ENCODE measurements at regions of chr6 and their contacts with region 1.

Region 1: DNA sequence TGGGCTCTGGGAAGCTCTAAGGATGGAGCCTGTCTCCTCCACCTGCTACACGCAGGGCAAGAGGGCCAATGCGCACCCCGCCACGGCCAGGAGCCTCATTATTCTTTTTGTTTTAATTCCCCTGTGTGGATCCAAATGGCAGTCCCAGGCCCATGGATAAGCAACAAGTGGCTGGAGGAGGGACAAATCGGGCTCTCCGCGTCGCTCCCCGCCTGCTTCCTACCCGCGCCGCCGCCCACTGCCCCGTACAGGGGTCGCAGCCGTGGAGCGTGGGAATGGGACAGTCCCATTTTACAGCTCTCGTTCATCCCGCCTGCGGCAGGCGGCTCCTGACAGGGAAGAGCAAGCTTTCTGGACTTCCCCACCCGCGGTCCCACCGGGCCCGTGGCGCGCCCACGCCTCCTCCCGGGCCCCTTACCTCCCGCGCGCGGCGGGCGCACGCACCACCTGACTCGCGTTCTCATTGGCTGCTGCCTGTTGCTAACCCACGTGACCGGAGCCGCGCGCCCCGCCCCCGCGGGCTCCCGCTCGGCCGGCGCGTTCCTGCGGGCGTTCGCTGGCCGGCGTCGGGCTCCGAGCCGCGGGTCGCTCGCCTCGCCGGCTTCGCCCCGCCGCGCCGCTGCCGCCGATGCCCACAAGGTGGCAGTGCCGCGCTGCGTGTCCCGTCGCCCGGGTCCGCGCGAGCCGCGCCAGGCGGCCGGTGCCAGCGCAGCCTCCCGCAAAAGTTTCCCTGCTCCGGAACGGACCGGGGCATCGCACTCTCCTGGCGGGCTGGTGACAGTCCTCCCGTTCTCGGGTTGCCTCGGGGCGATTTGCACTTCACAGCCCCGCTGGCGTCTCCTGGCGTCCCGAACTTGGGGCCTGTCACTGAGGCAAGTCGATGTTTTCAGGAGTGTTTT is 93.3 kb downstream of the CD83 start:
- DNase-seq: peak; percentile 87 to 92
- ATAC-seq: peak; percentile 92 to 94
- H3K4me3 ChIP-seq: peak overlapping the region; percentile 75 to 93 (median 82)
- H3K27ac ChIP-seq: peak overlapping the region; percentile 86 to 89 (median 87)
- H3K4me1 ChIP-seq: peaks cover 12% of the 10 kb centered on the region in 2 donors
- H3K27me3 ChIP-seq: no peaks in the 10 kb centered on the region
- CTCF ChIP-seq: peak; percentile 48 to 99 (median 98)
- POLR2A ChIP-seq: peak; percentile 63 to 78

Region 2: GRCh38 chr6:14002176-14002947 is 208.6 kb before region 1 on chr6:
- in situ Hi-C with region 1: no loop called
- intact Hi-C with region 1: no loop called
- DNase-seq: no peak
- ATAC-seq: no peak
- H3K4me3 ChIP-seq: no peak overlapping the region
- H3K27ac ChIP-seq: no peak overlapping the region
- H3K4me1 ChIP-seq: no peaks in the 10 kb centered on the region
- H3K27me3 ChIP-seq: no peaks in the 10 kb centered on the region
- CTCF ChIP-seq: no peak
- POLR2A ChIP-seq: no peak

Region 3: DNA sequence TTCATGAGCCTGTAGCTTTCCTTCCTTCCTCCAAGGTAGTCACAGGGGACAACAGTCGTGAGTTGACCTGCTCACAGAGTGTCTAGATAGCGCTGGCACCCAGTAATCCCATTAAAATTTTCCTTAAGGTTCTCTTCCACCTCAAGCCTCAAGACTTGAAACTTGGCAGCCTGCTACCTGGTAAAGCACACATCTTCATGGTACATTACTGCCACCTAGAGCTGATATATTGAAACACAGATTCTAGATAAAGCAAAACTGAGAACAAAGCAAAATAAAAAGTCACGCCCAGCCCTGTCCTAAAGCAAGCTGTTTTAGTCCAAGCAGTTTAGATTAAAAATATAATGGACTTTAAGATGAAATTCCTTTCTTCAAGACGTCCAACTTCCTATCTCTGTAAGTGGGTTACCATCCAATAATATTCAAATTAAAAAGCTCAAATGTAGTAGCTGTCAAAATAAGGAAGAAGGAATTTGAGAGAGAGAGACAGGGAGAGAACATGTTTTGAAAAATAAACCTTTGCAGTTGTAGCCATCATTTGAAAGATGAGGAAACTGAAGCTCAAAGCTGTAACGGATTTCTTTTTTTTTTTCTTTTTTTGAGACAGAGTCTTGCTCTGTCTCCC is 144.0 kb before region 1 on chr6:
- in situ Hi-C with region 1: no loop called
- intact Hi-C with region 1: no loop called
- DNase-seq: no peak
- ATAC-seq: peak; percentile 56 to 78
- H3K4me3 ChIP-seq: no peak overlapping the region
- H3K27ac ChIP-seq: no peak overlapping the region
- H3K4me1 ChIP-seq: no peaks in the 10 kb centered on the region
- H3K27me3 ChIP-seq: peaks cover 0 to 10% (median 4%) of the 10 kb centered on the region in 3 donors
- CTCF ChIP-seq: peak; percentile 54 to 70 (median 62)
- POLR2A ChIP-seq: no peak

Region 4: DNA sequence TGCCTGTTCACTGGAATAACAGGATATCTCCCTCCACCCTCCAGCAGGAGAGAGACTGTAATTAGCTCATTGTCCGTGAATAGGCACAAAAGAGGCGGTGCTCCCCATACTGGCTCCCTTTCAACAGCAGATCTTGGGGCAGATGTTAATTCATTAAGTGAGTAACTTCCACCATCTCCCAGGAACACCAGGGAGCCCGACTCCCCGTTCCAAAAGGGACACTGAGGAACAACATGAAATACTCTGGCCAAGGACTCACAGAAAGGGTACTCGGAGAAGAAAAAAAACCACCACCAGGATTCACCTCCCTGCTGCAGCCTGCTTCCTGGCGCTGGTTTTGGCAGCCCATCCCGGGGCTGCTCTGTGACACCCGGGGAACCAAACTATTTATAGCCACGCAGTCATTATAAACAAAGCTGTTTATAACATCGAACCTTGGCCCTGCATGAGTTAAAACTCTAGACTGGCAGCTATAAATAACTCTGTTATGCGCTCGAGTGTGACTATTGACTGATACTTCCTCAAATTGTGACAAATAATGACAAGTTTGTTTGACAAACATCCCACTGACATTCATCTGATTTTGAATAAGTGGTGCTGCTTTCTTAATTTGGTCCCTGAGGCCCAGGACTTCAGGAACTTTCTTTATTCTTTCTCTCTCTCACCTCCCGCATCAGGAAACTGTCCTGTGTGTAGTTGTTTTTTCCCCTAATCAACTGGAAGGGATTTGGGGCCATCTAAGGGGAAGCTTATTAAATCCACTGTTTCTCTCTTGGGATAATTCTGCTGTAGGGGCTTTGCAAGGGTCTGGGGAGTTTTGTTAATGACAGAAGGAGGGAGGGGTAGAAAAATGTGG is 428.2 kb after region 1 on chr6:
- in situ Hi-C with region 1: no loop called
- intact Hi-C with region 1: loop called (anchors 2 kb)
- DNase-seq: peak; percentile 50 to 74
- ATAC-seq: peak; percentile 92 to 94
- H3K4me3 ChIP-seq: peak overlapping the region; percentile 44 to 54 (median 48)
- H3K27ac ChIP-seq: peak overlapping the region; percentile 83 to 94 (median 86)
- H3K4me1 ChIP-seq: peaks cover 45 to 46% of the 10 kb centered on the region in 2 donors
- H3K27me3 ChIP-seq: no peaks in the 10 kb centered on the region
- CTCF ChIP-seq: peak in 2 of 5 experiments; percentile 20
- POLR2A ChIP-seq: peak in 1 of 2 donors; percentile 51

Region 5: DNA sequence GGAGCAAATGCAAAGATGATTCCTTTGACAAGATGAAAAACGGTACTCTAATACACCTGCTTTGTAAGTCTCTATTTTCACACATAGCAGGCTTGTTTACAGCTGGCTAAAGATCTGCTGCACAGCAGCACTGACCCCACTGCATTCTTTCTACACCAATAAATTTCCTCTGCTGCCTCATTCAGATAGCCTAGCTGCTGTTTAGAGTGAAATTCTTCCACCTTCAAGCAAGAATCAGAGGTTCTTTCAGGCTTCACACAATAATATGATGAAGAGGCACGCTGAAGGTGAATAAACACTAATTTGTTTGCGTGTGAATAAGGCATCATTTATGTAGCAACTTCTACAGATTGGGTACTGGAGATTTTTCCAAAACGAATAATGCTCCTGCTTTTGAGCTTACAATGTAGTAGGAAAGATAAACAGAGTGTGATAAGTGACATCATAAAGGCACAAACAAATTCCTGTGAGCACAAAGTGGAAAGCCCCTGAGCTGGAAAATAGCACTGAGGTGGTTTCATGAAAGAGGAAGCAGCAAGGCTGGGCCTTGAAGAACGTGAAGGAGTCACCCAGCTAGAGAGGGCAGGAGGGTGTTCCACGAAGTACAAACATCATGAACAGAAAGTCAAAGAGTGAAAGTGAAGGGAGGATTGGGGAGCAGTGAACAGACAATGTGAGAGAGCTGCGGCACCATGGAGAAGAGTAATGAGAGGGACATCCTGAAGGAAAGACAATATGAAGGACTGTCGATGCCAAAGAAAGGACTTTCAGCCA is 450.1 kb after region 1 on chr6:
- in situ Hi-C with region 1: no loop called
- intact Hi-C with region 1: no loop called
- DNase-seq: no peak
- ATAC-seq: no peak
- H3K4me3 ChIP-seq: no peak overlapping the region
- H3K27ac ChIP-seq: no peak overlapping the region
- H3K4me1 ChIP-seq: peaks cover 0 to 4% of the 10 kb centered on the region in 2 donors
- H3K27me3 ChIP-seq: no peaks in the 10 kb centered on the region
- CTCF ChIP-seq: no peak
- POLR2A ChIP-seq: no peak

Region 6: DNA sequence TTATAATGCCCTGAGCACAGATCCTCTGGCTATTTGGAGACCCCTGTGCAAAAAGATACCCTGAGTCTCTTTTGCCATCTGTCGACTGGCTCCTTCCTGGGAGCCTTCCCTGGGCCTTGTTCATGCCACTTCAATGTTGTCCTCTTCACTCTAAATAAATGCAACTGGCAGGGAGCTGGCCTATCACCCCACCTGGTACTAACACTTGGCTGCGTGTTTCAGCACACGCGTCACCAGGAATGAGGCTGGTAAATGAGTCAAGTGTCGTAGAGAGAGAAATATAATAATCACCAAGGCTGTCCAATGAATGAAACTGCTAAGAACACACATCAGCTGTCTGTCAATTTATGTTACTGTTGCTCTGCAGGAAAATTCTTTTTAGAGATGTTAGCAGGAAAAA is 660.3 kb after region 1 on chr6:
- in situ Hi-C with region 1: no loop called
- intact Hi-C with region 1: loop called (anchors 5 kb)
- DNase-seq: peak; percentile 74 to 82
- ATAC-seq: peak; percentile 99
- H3K4me3 ChIP-seq: no peak overlapping the region
- H3K27ac ChIP-seq: peak overlapping the region; percentile 57 to 74 (median 71)
- H3K4me1 ChIP-seq: peaks cover 13 to 15% of the 10 kb centered on the region in 2 donors
- H3K27me3 ChIP-seq: no peaks in the 10 kb centered on the region
- CTCF ChIP-seq: no peak
- POLR2A ChIP-seq: peak in 1 of 2 donors; percentile 51

Region 7: GRCh38 chr6:15464211-15464725 is 1253.4 kb after region 1 on chr6:
- in situ Hi-C with region 1: loop called in 1 of 4 experiments (anchors 25 kb)
- intact Hi-C with region 1: no loop called
- DNase-seq: peak in 1 of 2 donors; percentile 46
- ATAC-seq: peak in 1 of 2 donors; percentile 34
- H3K4me3 ChIP-seq: no peak overlapping the region
- H3K27ac ChIP-seq: no peak overlapping the region
- H3K4me1 ChIP-seq: peaks cover 45 to 49% of the 10 kb centered on the region in 2 donors
- H3K27me3 ChIP-seq: no peaks in the 10 kb centered on the region
- CTCF ChIP-seq: peak; percentile 34 to 74 (median 65)
- POLR2A ChIP-seq: no peak

Region 8: GRCh38 chr6:15621203-15622044 is 1410.5 kb after region 1 on chr6:
- in situ Hi-C with region 1: loop called (anchors 10 to 25 kb)
- intact Hi-C with region 1: loop called (anchors 2 kb)
- DNase-seq: peak; percentile 15 to 40
- ATAC-seq: peak; percentile 59 to 60
- H3K4me3 ChIP-seq: no peak overlapping the region
- H3K27ac ChIP-seq: peak overlapping the region; percentile 72 to 79 (median 76)
- H3K4me1 ChIP-seq: peaks cover 33 to 34% of the 10 kb centered on the region in 2 donors
- H3K27me3 ChIP-seq: no peaks in the 10 kb centered on the region
- CTCF ChIP-seq: no peak
- POLR2A ChIP-seq: no peak